WTC11 (cell line): ENCODE measurements at regions of chr6 and their contacts with region 1.

Region 1: GRCh38 chr6:41735427-41736356 is at the start of gene TFEB:
- DNase-seq: peak; percentile 94
- ATAC-seq: peak; percentile 52
- H3K4me3 Mint-ChIP-seq: peak within 1 kb of the TSS; percentile 67
- H3K27ac Mint-ChIP-seq: 0 out of 2 replicates have a peak within 1 kb of the TSS, but pooled peaks have one; percentile 63
- H3K4me1 Mint-ChIP-seq: peaks cover 27% of the 10 kb centered on the region
- H3K27me3 Mint-ChIP-seq: peaks cover 18% of the 10 kb centered on the region
- CTCF ChIP-seq: peak; percentile 72
- total RNA-seq, gene TFEB: 3.1 to 3.9 TPM (median 3.3 TPM) in 3 replicates

Region 2: DNA sequence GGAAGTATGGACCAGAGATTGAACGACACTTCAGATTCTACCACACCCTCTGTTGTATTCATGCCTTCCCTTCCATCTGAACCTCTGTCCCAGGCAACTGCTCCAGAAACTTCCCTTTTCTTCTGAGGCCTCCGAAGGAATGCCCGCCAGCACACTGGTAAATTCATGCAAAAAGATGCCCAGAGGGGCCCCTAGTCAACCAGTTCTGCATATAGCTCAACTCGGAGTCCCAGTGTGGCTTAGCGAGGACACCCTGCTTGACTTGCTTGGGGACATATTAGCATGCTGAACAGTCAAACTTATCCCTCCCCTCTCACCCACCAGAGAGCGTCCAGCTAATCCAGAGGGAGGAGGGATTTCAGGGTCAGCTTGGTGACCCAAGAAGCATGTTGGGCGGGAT is 120.4 kb before region 1 on chr6:
- CTCF ChIA-PET with region 1: no interaction called
- POLR2A ChIA-PET with region 1: no interaction called
- DNase-seq: no peak
- ATAC-seq: no peak
- H3K4me3 Mint-ChIP-seq: no peak overlapping the region
- H3K27ac Mint-ChIP-seq: no peak overlapping the region
- H3K4me1 Mint-ChIP-seq: peaks cover 6% of the 10 kb centered on the region; the same call in 1 of the 2 replicates
- H3K27me3 Mint-ChIP-seq: peaks cover 24% of the 10 kb centered on the region
- CTCF ChIP-seq: no peak

Region 3: GRCh38 chr6:41700463-41701347 is 35.0 kb before region 1 on chr6:
- CTCF ChIA-PET with region 1: interaction called, 37 read pairs
- POLR2A ChIA-PET with region 1: no interaction called
- DNase-seq: peak; percentile 50
- ATAC-seq: peak; percentile 69
- H3K4me3 Mint-ChIP-seq: no peak overlapping the region
- H3K27ac Mint-ChIP-seq: no peak overlapping the region
- H3K4me1 Mint-ChIP-seq: peaks cover 11% of the 10 kb centered on the region
- H3K27me3 Mint-ChIP-seq: no peaks in the 10 kb centered on the region
- CTCF ChIP-seq: no peak

Region 4: GRCh38 chr6:41723530-41724227 is 12.0 kb before region 1 on chr6:
- CTCF ChIA-PET with region 1: interaction called, 10 read pairs
- POLR2A ChIA-PET with region 1: interaction called, 4 read pairs
- DNase-seq: peak; percentile 36
- ATAC-seq: peak; percentile 86
- H3K4me3 Mint-ChIP-seq: no peak overlapping the region
- H3K27ac Mint-ChIP-seq: peak overlapping the region; percentile 60; the same call in 1 of the 2 replicates
- H3K4me1 Mint-ChIP-seq: peaks cover 23% of the 10 kb centered on the region
- H3K27me3 Mint-ChIP-seq: no peaks in the 10 kb centered on the region
- CTCF ChIP-seq: no peak

Region 5: GRCh38 chr6:41747256-41748101 is 11.8 kb after region 1 on chr6 and contains the start of gene PGC:
- CTCF ChIA-PET with region 1: interaction called, 16 read pairs
- POLR2A ChIA-PET with region 1: no interaction called
- DNase-seq: no peak
- ATAC-seq: no peak
- H3K4me3 Mint-ChIP-seq: no peak within 1 kb of the TSS
- H3K27ac Mint-ChIP-seq: no peak within 1 kb of the TSS
- H3K4me1 Mint-ChIP-seq: no peaks in the 10 kb centered on the region
- H3K27me3 Mint-ChIP-seq: no peaks in the 10 kb centered on the region; the same call in 1 of the 2 replicates
- CTCF ChIP-seq: no peak
- total RNA-seq, gene PGC: 0.55 to 0.63 TPM (median 0.62 TPM) in 3 replicates

Region 6: DNA sequence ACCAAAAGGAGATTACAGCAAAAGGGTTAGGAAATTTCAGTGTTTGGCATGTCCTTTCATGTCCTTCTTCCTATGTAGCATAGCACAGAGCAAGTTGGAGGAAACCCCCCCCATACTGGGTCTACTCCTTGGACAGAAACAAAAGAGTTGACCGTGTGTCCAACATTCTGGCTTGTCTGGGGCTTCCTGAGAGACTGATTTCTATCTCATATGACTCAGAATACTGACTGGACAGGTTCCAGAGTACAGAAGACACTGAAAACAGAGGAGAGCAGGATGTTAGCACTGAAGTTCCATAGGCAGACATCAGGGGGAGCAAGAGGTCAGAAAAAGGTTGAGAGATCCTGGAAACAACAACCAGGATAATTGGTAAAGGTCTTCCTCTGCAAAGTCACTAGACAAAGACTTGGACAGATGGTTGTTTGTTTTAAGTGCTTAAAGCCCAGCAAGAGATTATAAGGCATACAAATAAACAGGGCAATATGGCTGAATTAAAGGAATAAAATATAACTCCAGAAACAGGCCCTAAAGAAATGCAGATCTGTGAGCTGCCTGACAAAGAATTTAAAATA is 111.1 kb after region 1 on chr6:
- CTCF ChIA-PET with region 1: no interaction called
- POLR2A ChIA-PET with region 1: no interaction called
- DNase-seq: peak; percentile 68
- ATAC-seq: peak; percentile 89
- H3K4me3 Mint-ChIP-seq: no peak overlapping the region
- H3K27ac Mint-ChIP-seq: peak overlapping the region; percentile 84; the same call in 1 of the 2 replicates
- H3K4me1 Mint-ChIP-seq: peaks cover 2% of the 10 kb centered on the region; the same call in 1 of the 2 replicates
- H3K27me3 Mint-ChIP-seq: no peaks in the 10 kb centered on the region
- CTCF ChIP-seq: peak; percentile 53

Region 7: GRCh38 chr6:42158011-42158410 is 422.3 kb after region 1 on chr6:
- CTCF ChIA-PET with region 1: no interaction called
- POLR2A ChIA-PET with region 1: no interaction called
- DNase-seq: no peak
- ATAC-seq: no peak
- H3K4me3 Mint-ChIP-seq: no peak overlapping the region
- H3K27ac Mint-ChIP-seq: no peak overlapping the region
- H3K4me1 Mint-ChIP-seq: peaks cover 38% of the 10 kb centered on the region
- H3K27me3 Mint-ChIP-seq: peaks cover 47% of the 10 kb centered on the region
- CTCF ChIP-seq: no peak